CD4-positive, alpha-beta T cell (primary cell): ENCODE measurements at regions of chr3 and their contacts with region 1.

Region 1: GRCh38 chr3:66428733-66429132 is 72.1 kb downstream of the LRIG1 start:
- DNase-seq: no peak
- ATAC-seq: no peak
- H3K4me3 ChIP-seq: no peak overlapping the region
- H3K4me3 Mint-ChIP-seq: no peak overlapping the region
- H3K27ac ChIP-seq: no peak overlapping the region
- H3K27ac Mint-ChIP-seq: no peak overlapping the region
- H3K4me1 ChIP-seq: peaks cover 14% of the 10 kb centered on the region
- H3K4me1 Mint-ChIP-seq: peaks cover 29% of the 10 kb centered on the region
- H3K27me3 ChIP-seq: no peaks in the 10 kb centered on the region
- H3K27me3 Mint-ChIP-seq: no peaks in the 10 kb centered on the region
- CTCF ChIP-seq: no peak

Region 2: GRCh38 chr3:66302288-66302687 is 126.4 kb before region 1 on chr3:
- CTCF ChIA-PET with region 1: no interaction called
- POLR2A ChIA-PET with region 1: no interaction called
- intact Hi-C with region 1: no loop called
- DNase-seq: peak in 12 of 14 experiments; percentile 9 to 92 (median 40)
- ATAC-seq: peak; percentile 80
- H3K4me3 ChIP-seq: no peak overlapping the region
- H3K4me3 Mint-ChIP-seq: peak overlapping the region; percentile 47
- H3K27ac ChIP-seq: peak overlapping the region; percentile 71 to 85
- H3K27ac Mint-ChIP-seq: peak overlapping the region; percentile 98
- H3K4me1 ChIP-seq: peaks cover 40% of the 10 kb centered on the region
- H3K4me1 Mint-ChIP-seq: peaks cover 81% of the 10 kb centered on the region
- H3K27me3 ChIP-seq: no peaks in the 10 kb centered on the region
- H3K27me3 Mint-ChIP-seq: no peaks in the 10 kb centered on the region
- CTCF ChIP-seq: no peak

Region 3: GRCh38 chr3:66372681-66373350 is 55.9 kb before region 1 on chr3:
- CTCF ChIA-PET with region 1: no interaction called
- POLR2A ChIA-PET with region 1: no interaction called
- intact Hi-C with region 1: no loop called
- DNase-seq: peak; percentile 21 to 67 (median 46)
- ATAC-seq: peak; percentile 70
- H3K4me3 ChIP-seq: no peak overlapping the region
- H3K4me3 Mint-ChIP-seq: no peak overlapping the region
- H3K27ac ChIP-seq: no peak overlapping the region
- H3K27ac Mint-ChIP-seq: peak overlapping the region; percentile 13
- H3K4me1 ChIP-seq: peaks cover 9% of the 10 kb centered on the region
- H3K4me1 Mint-ChIP-seq: peaks cover 11% of the 10 kb centered on the region
- H3K27me3 ChIP-seq: no peaks in the 10 kb centered on the region
- H3K27me3 Mint-ChIP-seq: no peaks in the 10 kb centered on the region
- CTCF ChIP-seq: peak; percentile 17

Region 4: DNA sequence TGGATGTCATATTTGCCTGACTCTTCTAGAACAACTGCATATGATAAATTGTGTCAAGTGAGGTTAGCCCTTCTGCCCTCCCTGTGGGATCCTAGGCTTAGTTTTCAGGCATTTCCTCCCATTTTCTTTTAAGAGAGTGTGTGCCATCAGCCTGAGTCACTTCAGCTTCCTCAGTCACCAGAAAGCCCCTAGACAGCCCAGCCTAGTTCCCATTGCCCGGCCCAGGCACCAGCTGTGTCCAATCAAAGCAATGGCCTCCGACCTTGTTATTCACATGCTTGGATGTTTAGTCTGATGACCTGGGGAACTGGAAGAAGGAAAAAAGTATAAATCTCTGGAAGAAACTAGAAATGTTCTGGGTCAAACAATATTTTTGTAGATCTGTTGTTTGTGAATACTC is 293.9 kb after region 1 on chr3:
- CTCF ChIA-PET with region 1: no interaction called
- POLR2A ChIA-PET with region 1: no interaction called
- intact Hi-C with region 1: loop called in 1 of 2 experiments (anchors 5 kb)
- DNase-seq: no peak
- ATAC-seq: no peak
- H3K4me3 ChIP-seq: no peak overlapping the region
- H3K4me3 Mint-ChIP-seq: no peak overlapping the region
- H3K27ac ChIP-seq: no peak overlapping the region
- H3K27ac Mint-ChIP-seq: no peak overlapping the region
- H3K4me1 ChIP-seq: no peaks in the 10 kb centered on the region
- H3K4me1 Mint-ChIP-seq: no peaks in the 10 kb centered on the region
- H3K27me3 ChIP-seq: no peaks in the 10 kb centered on the region
- H3K27me3 Mint-ChIP-seq: peaks cover 10% of the 10 kb centered on the region
- CTCF ChIP-seq: no peak

Region 5: GRCh38 chr3:66756468-66757036 is 327.8 kb after region 1 on chr3:
- CTCF ChIA-PET with region 1: no interaction called
- POLR2A ChIA-PET with region 1: no interaction called
- intact Hi-C with region 1: no loop called
- DNase-seq: no peak
- ATAC-seq: no peak
- H3K4me3 ChIP-seq: no peak overlapping the region
- H3K4me3 Mint-ChIP-seq: no peak overlapping the region
- H3K27ac ChIP-seq: no peak overlapping the region
- H3K27ac Mint-ChIP-seq: no peak overlapping the region
- H3K4me1 ChIP-seq: no peaks in the 10 kb centered on the region
- H3K4me1 Mint-ChIP-seq: no peaks in the 10 kb centered on the region
- H3K27me3 ChIP-seq: no peaks in the 10 kb centered on the region
- H3K27me3 Mint-ChIP-seq: no peaks in the 10 kb centered on the region
- CTCF ChIP-seq: no peak